HEK293 (cell line): ENCODE measurements at regions of chrX and their contacts with region 1.

Region 1: DNA sequence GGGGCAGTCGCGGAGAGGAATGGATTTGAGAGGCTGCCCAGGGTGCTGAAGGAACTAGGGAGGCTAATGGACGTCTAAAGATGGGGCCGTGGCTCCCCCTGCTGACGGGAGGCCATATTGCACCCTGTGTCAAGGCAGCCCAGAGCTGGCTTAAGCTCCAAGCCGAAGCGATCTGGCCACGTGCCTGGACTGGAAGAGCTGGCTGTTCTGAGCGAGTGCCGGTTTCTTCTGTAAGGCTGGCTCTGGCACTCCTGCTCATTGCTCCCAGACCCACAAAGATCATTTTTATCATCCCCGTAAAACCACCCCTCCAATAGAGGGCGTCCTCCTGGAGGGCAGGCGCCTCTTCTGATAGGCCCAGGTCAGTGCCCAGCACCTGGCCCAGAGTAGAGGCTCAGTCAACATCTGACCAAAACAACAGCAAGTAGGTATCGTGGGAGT is 5.6 kb downstream of the PNCK start:
- H3K4me3 ChIP-seq: no peak overlapping the region
- H3K27ac ChIP-seq: no peak overlapping the region
- H3K4me1 ChIP-seq: no peaks in the 10 kb centered on the region
- CTCF ChIP-seq: peak; percentile 91

Region 2: DNA sequence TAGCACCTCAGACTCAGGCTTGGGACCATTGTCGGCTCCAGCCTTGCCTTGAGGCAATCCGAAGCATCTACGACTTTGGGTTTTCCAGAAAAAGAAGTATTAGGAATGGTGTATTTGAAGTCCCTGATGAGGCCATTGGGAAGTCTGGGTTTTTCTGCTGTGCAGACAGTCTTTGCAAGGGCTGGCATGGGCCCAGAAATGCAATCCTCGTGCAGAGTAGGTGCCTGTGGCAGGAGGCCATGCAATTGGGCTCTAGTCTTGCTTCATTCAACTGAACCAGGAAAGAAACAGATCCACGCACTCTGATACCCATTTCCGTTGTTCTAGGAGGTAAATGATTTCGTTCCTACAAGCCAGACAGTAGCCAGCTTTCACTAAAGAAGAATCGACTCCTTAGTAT is 244.3 kb before region 1 on chrX:
- CTCF ChIA-PET with region 1: no interaction called
- POLR2A ChIA-PET with region 1: no interaction called
- H3K4me3 ChIP-seq: no peak overlapping the region
- H3K27ac ChIP-seq: no peak overlapping the region
- H3K4me1 ChIP-seq: no peaks in the 10 kb centered on the region
- CTCF ChIP-seq: no peak

Region 3: GRCh38 chrX:153539171-153539978 is 128.6 kb before region 1 on chrX:
- CTCF ChIA-PET with region 1: interaction called, 63 read pairs
- POLR2A ChIA-PET with region 1: no interaction called
- H3K4me3 ChIP-seq: no peak overlapping the region
- H3K27ac ChIP-seq: no peak overlapping the region
- H3K4me1 ChIP-seq: no peaks in the 10 kb centered on the region
- CTCF ChIP-seq: peak; percentile 99

Region 4: DNA sequence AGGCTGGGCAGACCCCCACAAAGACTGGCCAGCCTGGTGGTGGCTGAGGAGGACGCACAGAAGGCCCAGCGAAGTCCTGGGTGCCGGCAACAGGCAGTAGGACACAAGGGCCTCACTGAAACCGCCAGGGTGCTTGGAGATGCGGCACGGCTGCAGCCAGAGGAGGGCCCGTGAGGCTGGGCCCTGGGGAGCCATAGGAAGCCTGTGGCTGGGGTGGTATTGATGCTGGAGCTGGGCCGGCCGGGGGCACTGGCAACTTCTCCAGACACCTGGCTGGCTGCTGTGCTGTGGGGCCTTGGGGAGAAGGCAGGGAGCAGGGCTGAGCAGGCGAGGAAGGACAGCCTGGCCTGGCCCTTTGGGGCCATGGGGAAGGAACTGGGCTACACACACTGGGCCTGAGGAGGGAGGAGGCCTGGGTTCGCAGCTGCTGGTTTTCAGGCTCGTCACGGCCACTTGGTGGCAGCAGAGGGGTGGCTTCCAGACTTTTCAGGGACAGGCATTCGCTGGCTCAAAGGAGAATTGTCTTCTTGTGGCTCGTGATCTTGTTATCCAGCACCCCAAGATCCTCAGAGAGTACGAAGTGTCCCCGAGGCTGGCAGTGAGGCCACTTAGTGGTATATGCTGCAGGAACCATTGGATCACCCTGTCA is 113.3 kb before region 1 on chrX:
- CTCF ChIA-PET with region 1: interaction called, 36 read pairs
- POLR2A ChIA-PET with region 1: interaction called, 3 read pairs
- H3K4me3 ChIP-seq: no peak overlapping the region
- H3K27ac ChIP-seq: no peak overlapping the region
- H3K4me1 ChIP-seq: no peaks in the 10 kb centered on the region
- CTCF ChIP-seq: peak; percentile 78

Region 5: GRCh38 chrX:153609917-153610428 is 58.0 kb before region 1 on chrX:
- CTCF ChIA-PET with region 1: interaction called, 52 read pairs
- POLR2A ChIA-PET with region 1: no interaction called
- H3K4me3 ChIP-seq: peak overlapping the region; percentile 10
- H3K27ac ChIP-seq: no peak overlapping the region
- H3K4me1 ChIP-seq: no peaks in the 10 kb centered on the region
- CTCF ChIP-seq: peak; percentile 74

Region 6: DNA sequence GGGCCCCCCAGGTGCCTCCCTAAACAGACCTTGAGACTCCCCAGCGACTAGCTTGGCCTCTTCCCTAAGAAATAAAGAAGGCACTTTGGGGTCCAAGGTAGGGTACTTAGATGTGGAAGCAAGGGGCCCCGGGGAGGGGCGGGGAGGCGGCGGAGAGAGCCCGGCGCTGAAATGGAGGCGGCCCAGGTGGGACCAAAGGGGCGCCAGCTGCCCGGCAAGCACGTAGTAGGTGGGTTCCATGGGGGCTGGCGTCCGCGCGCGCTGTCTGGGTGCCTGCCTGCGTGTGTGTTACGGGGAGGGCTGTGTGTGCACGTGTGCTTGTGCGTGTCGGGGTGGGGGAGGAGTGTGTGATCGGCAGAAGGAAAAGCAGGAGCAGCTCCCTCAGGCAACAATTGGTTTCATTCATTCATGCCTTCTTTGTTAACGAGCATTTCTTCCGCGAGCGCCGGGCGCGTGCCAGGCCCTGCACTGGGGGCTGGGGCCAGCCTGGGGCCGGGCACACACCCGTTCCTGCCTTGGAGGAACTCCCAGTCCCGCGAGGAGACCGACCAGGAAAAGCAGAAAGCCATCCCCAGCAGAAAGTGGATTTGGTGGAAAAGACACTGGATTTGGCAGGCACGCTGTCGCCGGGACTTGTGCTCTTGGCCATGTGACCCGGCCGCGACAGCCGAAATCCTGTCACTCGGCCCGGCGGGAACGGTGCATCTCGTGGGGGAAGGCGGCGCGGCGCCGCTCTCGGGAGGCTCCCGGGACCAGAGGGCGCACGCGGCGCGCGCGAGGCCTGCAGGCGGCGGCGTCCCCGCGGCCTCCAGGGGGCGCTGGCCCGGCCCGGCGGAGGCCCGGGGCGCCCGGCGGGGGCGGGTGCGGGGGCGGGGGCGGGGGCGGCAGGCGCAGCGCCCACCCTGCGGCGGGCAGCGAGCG is 24.3 kb before region 1 on chrX:
- CTCF ChIA-PET with region 1: interaction called, 39 read pairs
- POLR2A ChIA-PET with region 1: no interaction called
- H3K4me3 ChIP-seq: peak overlapping the region; percentile 1
- H3K27ac ChIP-seq: no peak overlapping the region
- H3K4me1 ChIP-seq: peaks cover 3% of the 10 kb centered on the region; the same call in 1 of the 2 replicates
- CTCF ChIP-seq: no peak

Region 7: GRCh38 chrX:153657161-153657560 is 10.8 kb before region 1 on chrX:
- CTCF ChIA-PET with region 1: interaction called, 40 read pairs
- POLR2A ChIA-PET with region 1: no interaction called
- H3K4me3 ChIP-seq: no peak overlapping the region
- H3K27ac ChIP-seq: no peak overlapping the region
- H3K4me1 ChIP-seq: no peaks in the 10 kb centered on the region
- CTCF ChIP-seq: no peak

Region 8: DNA sequence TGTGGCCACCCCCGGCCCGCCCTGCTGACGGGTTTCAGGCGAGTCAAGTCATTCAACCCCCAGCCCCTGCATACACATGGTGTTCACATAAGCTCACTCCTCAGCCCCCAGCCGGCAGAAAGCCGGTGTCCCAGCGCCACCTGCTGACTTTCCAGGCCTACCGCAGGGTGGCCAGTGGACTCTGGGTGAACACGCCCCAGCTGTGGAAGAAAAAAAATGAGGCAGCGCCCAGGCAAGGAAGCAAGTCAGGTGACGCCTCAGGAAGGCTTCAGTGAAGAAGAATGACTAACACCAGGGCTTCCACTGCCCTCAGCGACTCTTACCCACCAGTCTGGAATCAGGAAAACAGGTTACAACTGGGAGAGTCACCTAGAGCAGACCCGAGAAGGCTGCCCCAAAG is 40.4 kb after region 1 on chrX:
- CTCF ChIA-PET with region 1: interaction called, 15 read pairs
- POLR2A ChIA-PET with region 1: interaction called, 5 read pairs
- H3K4me3 ChIP-seq: no peak overlapping the region
- H3K27ac ChIP-seq: no peak overlapping the region
- H3K4me1 ChIP-seq: no peaks in the 10 kb centered on the region
- CTCF ChIP-seq: peak; percentile 85

Region 9: DNA sequence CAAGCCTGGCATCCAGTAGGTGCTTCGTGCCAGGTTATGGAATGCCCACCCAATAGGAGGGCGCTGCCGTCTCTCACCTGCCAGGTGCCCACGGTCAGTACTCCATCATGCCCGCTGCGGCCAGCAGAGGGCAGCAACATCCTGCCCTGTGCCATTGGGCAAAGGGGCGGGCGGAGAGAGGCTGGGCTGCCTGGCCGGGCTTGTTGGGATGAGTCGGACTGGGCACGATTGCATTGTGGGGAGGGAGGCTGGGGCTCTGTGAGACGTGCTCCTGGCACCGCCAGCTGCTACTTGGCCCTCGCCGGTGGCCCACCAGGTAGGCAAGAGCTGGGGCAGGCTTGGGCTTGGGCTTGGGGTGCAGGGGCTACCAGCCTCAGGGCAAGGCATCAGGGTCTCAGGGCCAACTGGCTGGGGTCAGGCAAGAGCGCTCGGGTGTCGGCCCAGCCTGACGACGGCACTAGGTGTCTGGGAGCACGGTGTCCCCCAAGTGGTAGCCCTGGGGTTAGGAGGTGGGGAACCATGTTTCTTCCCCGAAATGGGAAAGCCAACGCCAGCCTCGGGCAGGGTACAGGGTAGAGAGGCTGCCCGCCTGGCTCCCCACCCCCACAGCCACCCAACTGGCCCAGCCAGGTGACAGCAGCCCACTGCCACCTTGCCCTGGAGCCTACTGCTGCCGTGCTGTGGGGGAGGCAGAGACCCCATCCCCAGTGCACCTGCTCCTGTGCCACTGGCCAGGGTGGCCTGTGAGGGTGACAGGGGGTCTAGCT is 96.2 kb after region 1 on chrX and contains the start of gene PLXNB3:
- CTCF ChIA-PET with region 1: no interaction called
- POLR2A ChIA-PET with region 1: no interaction called
- H3K4me3 ChIP-seq: no peak within 1 kb of the TSS
- H3K27ac ChIP-seq: no peak within 1 kb of the TSS
- H3K4me1 ChIP-seq: 0 out of 2 replicates have a peak, but pooled peaks cover 3% of the 10 kb centered on the region
- CTCF ChIP-seq: peak; percentile 87

Region 10: GRCh38 chrX:153909024-153909970 is 241.3 kb after region 1 on chrX:
- CTCF ChIA-PET with region 1: no interaction called
- POLR2A ChIA-PET with region 1: no interaction called
- H3K4me3 ChIP-seq: no peak overlapping the region
- H3K27ac ChIP-seq: no peak overlapping the region
- H3K4me1 ChIP-seq: no peaks in the 10 kb centered on the region
- CTCF ChIP-seq: no peak